CD4-positive, alpha-beta T cell (primary cell): ENCODE measurements at regions of chr17 and their contacts with region 1.

Region 1: GRCh38 chr17:75412455-75413317 is 7.2 kb upstream of the GRB2 start:
- DNase-seq: peak; percentile 55 to 89 (median 66)
- ATAC-seq: peak; percentile 94
- H3K4me3 ChIP-seq: peak overlapping the region; percentile 11
- H3K4me3 Mint-ChIP-seq: peak overlapping the region; percentile 11
- H3K27ac ChIP-seq: no peak overlapping the region
- H3K27ac Mint-ChIP-seq: no peak overlapping the region
- H3K4me1 ChIP-seq: peaks cover 14% of the 10 kb centered on the region
- H3K4me1 Mint-ChIP-seq: peaks cover 16% of the 10 kb centered on the region
- H3K27me3 ChIP-seq: no peaks in the 10 kb centered on the region
- H3K27me3 Mint-ChIP-seq: no peaks in the 10 kb centered on the region
- CTCF ChIP-seq: peak; percentile 81

Region 2: GRCh38 chr17:74923533-74924249 is 489.0 kb before region 1 on chr17:
- CTCF ChIA-PET with region 1: no interaction called
- POLR2A ChIA-PET with region 1: no interaction called
- intact Hi-C with region 1: loop called in 1 of 2 experiments (anchors 5 kb)
- DNase-seq: peak; percentile 55 to 84 (median 66)
- ATAC-seq: peak; percentile 79
- H3K4me3 ChIP-seq: peak overlapping the region; percentile 37
- H3K4me3 Mint-ChIP-seq: peak overlapping the region; percentile 25
- H3K27ac ChIP-seq: no peak overlapping the region
- H3K27ac Mint-ChIP-seq: no peak overlapping the region
- H3K4me1 ChIP-seq: peaks cover 25% of the 10 kb centered on the region
- H3K4me1 Mint-ChIP-seq: peaks cover 15% of the 10 kb centered on the region
- H3K27me3 ChIP-seq: peaks cover 48 to 57% of the 10 kb centered on the region in 2 experiments
- H3K27me3 Mint-ChIP-seq: peaks cover 78% of the 10 kb centered on the region
- CTCF ChIP-seq: peak; percentile 89

Region 3: GRCh38 chr17:75059369-75060345 is 353.0 kb before region 1 on chr17:
- CTCF ChIA-PET with region 1: no interaction called
- POLR2A ChIA-PET with region 1: no interaction called
- intact Hi-C with region 1: loop called in 1 of 2 experiments (anchors 5 kb)
- DNase-seq: peak in 4 of 14 experiments; percentile 21 to 59 (median 48)
- ATAC-seq: peak; percentile 92
- H3K4me3 ChIP-seq: no peak overlapping the region
- H3K4me3 Mint-ChIP-seq: no peak overlapping the region
- H3K27ac ChIP-seq: no peak overlapping the region
- H3K27ac Mint-ChIP-seq: peak overlapping the region; percentile 61
- H3K4me1 ChIP-seq: peaks cover 6% of the 10 kb centered on the region
- H3K4me1 Mint-ChIP-seq: peaks cover 21% of the 10 kb centered on the region
- H3K27me3 ChIP-seq: no peaks in the 10 kb centered on the region
- H3K27me3 Mint-ChIP-seq: no peaks in the 10 kb centered on the region
- CTCF ChIP-seq: peak; percentile 39

Region 4: GRCh38 chr17:75238684-75239191 is 173.9 kb before region 1 on chr17:
- CTCF ChIA-PET with region 1: no interaction called
- POLR2A ChIA-PET with region 1: no interaction called
- intact Hi-C with region 1: loop called (anchors 1 to 2 kb)
- DNase-seq: peak; percentile 45 to 82 (median 54)
- ATAC-seq: peak; percentile 52
- H3K4me3 ChIP-seq: no peak overlapping the region
- H3K4me3 Mint-ChIP-seq: peak overlapping the region; percentile 12
- H3K27ac ChIP-seq: peak overlapping the region in 1 of 2 donors; percentile 26
- H3K27ac Mint-ChIP-seq: peak overlapping the region; percentile 68
- H3K4me1 ChIP-seq: peaks cover 47% of the 10 kb centered on the region
- H3K4me1 Mint-ChIP-seq: peaks cover 18% of the 10 kb centered on the region
- H3K27me3 ChIP-seq: no peaks in the 10 kb centered on the region
- H3K27me3 Mint-ChIP-seq: no peaks in the 10 kb centered on the region
- CTCF ChIP-seq: peak; percentile 71

Region 5: DNA sequence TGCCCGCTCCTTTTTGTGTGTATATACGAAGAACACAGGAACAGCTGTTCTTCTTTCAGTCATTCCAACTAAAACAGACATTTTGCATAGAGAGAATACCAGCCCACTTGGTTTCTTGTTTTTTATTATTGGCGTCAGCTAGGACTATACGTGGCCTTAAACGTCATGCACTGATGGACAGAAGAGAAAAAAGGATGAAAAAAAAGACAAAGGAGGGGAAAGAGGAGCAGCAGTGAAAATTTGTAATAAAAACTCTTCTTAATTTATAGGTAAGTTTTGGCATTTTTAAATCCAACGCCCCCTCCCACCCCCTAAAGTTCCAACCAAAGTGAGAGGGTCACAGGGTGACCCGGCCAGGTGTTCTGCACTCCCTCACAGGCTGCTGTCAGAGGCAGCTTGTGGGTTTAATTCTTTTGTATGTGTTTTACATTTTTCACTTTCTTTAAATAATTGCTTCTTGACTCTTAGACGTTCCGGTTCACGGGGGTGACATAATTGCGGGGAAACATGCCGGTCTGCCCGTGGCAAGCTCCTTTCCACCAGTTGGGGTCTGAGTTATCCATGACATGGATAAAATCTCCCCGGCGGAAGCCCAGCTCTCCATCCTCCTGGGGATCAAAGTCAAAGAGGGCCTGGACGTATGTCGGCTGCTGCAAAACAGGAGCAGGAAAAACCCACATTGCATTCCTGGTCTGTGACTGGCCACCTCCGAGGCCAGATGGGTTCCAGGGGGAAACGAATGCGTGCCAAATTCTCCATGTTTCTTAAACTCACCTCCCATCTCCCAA is 92.6 kb before region 1 on chr17:
- CTCF ChIA-PET with region 1: interaction called, 46 read pairs
- POLR2A ChIA-PET with region 1: interaction called, 10 read pairs
- intact Hi-C with region 1: loop called (anchors 1 kb)
- DNase-seq: no peak
- ATAC-seq: no peak
- H3K4me3 ChIP-seq: no peak overlapping the region
- H3K4me3 Mint-ChIP-seq: no peak overlapping the region
- H3K27ac ChIP-seq: no peak overlapping the region
- H3K27ac Mint-ChIP-seq: no peak overlapping the region
- H3K4me1 ChIP-seq: peaks cover 11% of the 10 kb centered on the region
- H3K4me1 Mint-ChIP-seq: peaks cover 9% of the 10 kb centered on the region
- H3K27me3 ChIP-seq: no peaks in the 10 kb centered on the region
- H3K27me3 Mint-ChIP-seq: no peaks in the 10 kb centered on the region
- CTCF ChIP-seq: no peak

Region 6: DNA sequence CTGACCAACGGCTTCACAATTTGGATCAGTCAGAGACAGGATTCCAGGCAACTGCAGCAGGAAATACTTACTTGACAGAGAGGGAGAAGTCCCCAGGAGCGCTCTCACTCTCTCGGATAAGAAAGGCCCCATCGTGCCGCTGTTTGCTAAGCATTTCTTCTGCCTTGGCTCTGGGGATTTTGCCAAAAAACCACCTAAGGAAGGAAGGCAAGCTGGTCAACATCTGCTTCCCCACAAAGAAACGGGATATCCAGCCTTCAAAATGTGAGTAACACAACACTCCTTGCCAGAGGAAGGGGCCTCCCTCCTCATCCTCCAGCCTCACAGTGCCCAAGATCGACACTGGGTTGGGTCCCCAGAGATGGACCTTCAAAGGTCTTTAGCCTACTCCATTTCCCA is 86.9 kb before region 1 on chr17:
- CTCF ChIA-PET with region 1: interaction called, 46 read pairs
- POLR2A ChIA-PET with region 1: interaction called, 10 read pairs
- intact Hi-C with region 1: loop called (anchors 1 kb)
- DNase-seq: peak in 2 of 14 experiments; percentile 50 to 55
- ATAC-seq: no peak
- H3K4me3 ChIP-seq: no peak overlapping the region
- H3K4me3 Mint-ChIP-seq: no peak overlapping the region
- H3K27ac ChIP-seq: peak overlapping the region; percentile 34 to 36
- H3K27ac Mint-ChIP-seq: peak overlapping the region; percentile 18
- H3K4me1 ChIP-seq: peaks cover 25% of the 10 kb centered on the region
- H3K4me1 Mint-ChIP-seq: peaks cover 35% of the 10 kb centered on the region
- H3K27me3 ChIP-seq: no peaks in the 10 kb centered on the region
- H3K27me3 Mint-ChIP-seq: no peaks in the 10 kb centered on the region
- CTCF ChIP-seq: no peak

Region 7: DNA sequence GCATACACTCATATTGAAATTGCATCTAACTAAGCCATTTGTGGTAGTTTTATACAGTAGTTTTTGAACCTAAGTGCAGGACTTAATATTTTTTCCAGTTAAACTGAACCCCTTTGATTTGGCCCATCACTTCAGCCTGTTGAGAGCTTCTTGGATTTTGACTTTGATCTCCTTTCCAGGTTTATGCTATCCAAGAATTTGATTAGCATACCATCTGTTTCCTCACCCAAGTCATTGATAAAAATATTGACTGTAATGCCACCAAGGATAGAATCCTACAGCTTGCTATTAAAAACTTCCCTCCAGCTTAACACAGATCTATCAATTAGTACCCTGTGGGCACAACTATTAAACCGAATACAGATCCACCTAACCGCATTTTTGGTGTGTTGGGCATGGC is 50.9 kb after region 1 on chr17:
- CTCF ChIA-PET with region 1: no interaction called
- POLR2A ChIA-PET with region 1: no interaction called
- intact Hi-C with region 1: no loop called
- DNase-seq: no peak
- ATAC-seq: no peak
- H3K4me3 ChIP-seq: no peak overlapping the region
- H3K4me3 Mint-ChIP-seq: no peak overlapping the region
- H3K27ac ChIP-seq: no peak overlapping the region
- H3K27ac Mint-ChIP-seq: no peak overlapping the region
- H3K4me1 ChIP-seq: no peaks in the 10 kb centered on the region
- H3K4me1 Mint-ChIP-seq: peaks cover 19% of the 10 kb centered on the region
- H3K27me3 ChIP-seq: no peaks in the 10 kb centered on the region
- H3K27me3 Mint-ChIP-seq: no peaks in the 10 kb centered on the region
- CTCF ChIP-seq: no peak